ENCODE measurements at regions of chr11 and their contacts with region 1.

Region 1: DNA sequence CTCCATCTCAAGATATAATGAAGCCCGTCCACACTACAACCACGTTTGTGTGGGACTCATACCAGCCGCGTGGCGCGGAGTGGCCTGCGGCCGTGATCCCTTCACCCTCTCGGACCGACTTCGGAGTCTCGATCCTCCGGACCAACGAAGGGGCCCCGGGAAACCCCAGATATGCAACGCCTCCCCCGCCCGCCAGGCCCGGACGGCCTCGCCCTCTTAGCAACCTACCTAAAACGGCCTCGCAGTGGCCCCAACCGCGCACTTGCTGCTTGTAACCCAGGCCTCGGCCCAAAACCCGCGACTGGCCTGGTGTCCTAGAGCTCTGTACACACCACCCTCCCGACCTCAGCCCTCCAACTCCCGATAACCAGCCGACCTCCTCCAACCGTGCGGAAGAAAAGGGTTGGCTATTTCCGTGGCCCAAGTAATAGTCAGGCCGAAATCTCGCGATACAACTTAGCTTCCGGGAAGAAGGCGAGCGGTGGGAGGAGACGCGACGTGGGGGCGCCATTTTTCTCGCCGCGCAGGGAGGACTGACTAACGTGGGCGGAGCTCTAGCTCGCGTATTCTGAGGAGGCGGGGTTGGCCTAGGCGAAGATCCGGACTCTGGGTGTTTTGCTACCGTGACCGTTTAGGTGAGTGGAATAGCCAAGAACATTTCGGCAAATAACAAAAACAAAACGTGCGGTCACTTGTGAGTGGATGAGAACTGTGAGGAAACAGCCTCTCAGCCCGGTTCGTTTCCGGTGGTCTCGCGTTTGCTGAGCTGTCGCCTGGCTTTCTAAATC is at the starts of genes C11orf54 and TAF1D:
- DNase-seq: peak; percentile 97
- ATAC-seq: peak; percentile 95
- H3K4me3 ChIP-seq: peak within 1 kb of the TSS; percentile 70
- H3K27ac ChIP-seq: peak within 1 kb of the TSS; percentile 94
- H3K4me1 ChIP-seq: no peaks in the 10 kb centered on the region
- H3K27me3 ChIP-seq: no peaks in the 10 kb centered on the region
- CTCF ChIP-seq: no peak
- POLR2A ChIP-seq: peak; percentile 99
- RAD21 ChIP-seq: no peak
- total RNA-seq, gene C11orf54: 16.0 and 21.4 TPM in 2 replicates
- total RNA-seq, gene TAF1D: 56.8 and 147 TPM in 2 replicates

Region 2: DNA sequence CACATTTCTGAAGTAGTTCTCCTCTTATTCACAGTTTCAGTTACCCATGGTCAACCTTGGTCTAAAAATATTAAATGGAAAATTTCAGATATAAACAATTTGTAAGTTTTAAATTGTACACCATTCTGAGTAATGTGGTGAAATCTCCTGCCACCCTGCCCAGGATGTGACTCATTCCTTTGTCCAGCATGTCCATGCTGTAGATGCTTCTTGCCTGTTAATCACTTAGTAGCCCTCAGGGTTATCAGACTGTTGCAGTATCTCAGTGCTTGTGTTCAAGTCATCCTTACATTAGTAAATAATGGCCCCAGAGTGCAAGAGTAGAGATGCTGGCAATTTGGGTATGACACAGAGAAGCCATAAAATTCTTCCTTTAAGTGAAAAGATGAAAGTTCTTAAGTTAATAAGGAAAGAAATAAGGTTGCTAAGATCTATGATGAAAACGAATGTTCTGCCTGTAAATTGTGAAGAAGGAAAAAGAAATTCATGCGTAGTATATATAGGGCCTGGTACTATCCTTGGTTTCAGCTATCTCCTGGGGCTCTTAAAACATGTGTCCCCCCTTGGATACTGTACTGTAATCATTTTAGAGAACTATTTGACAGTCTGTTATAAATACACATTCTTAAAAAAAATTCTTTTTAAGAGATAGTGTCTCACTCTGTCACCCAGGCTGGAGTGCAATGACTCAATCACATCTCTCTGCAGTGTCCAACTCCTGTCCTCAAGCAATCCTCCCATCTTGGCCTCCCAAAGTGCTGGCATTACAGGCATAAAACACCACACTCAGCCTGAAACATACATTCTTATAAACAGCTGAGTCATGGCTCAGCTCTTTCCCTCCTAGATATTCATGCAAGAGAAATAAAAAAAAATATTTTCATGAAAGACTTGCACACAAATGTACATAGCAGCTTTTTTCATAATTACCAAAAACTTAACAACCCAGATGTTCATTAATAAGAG is 740.5 kb before region 1 on chr11:
- CTCF ChIA-PET with region 1: no interaction called
- POLR2A ChIA-PET with region 1: interaction called, 10 read pairs
- dilution Hi-C with region 1: no loop called
- in situ Hi-C with region 1: no loop called
- intact Hi-C with region 1: no loop called
- DNase-seq: peak; percentile 95
- ATAC-seq: peak; percentile 90
- H3K4me3 ChIP-seq: no peak overlapping the region
- H3K27ac ChIP-seq: peak overlapping the region; percentile 68; the same call in 1 of the 2 replicates
- H3K4me1 ChIP-seq: peaks cover 6% of the 10 kb centered on the region
- H3K27me3 ChIP-seq: no peaks in the 10 kb centered on the region
- CTCF ChIP-seq: no peak
- POLR2A ChIP-seq: no peak
- RAD21 ChIP-seq: peak; percentile 16; the same call in 1 of the 2 replicates

Region 3: GRCh38 chr11:93784152-93784934 is 43.1 kb after region 1 on chr11 and contains the start of gene MED17:
- CTCF ChIA-PET with region 1: no interaction called
- POLR2A ChIA-PET with region 1: interaction called, 6 read pairs
- dilution Hi-C with region 1: no loop called
- in situ Hi-C with region 1: no loop called
- intact Hi-C with region 1: loop called (anchors 1 kb)
- DNase-seq: peak; percentile 92
- ATAC-seq: peak; percentile 96
- H3K4me3 ChIP-seq: peak within 1 kb of the TSS; percentile 91
- H3K27ac ChIP-seq: peak within 1 kb of the TSS; percentile 94
- H3K4me1 ChIP-seq: peaks cover 4% of the 10 kb centered on the region; the same call in 1 of the 2 replicates
- H3K27me3 ChIP-seq: no peaks in the 10 kb centered on the region
- CTCF ChIP-seq: peak; percentile 43
- POLR2A ChIP-seq: peak; percentile 84; the same call in 1 of the 2 replicates
- RAD21 ChIP-seq: peak; percentile 4; the same call in 1 of the 2 replicates
- total RNA-seq, gene MED17: 23.3 and 34.7 TPM in 2 replicates

Region 4: DNA sequence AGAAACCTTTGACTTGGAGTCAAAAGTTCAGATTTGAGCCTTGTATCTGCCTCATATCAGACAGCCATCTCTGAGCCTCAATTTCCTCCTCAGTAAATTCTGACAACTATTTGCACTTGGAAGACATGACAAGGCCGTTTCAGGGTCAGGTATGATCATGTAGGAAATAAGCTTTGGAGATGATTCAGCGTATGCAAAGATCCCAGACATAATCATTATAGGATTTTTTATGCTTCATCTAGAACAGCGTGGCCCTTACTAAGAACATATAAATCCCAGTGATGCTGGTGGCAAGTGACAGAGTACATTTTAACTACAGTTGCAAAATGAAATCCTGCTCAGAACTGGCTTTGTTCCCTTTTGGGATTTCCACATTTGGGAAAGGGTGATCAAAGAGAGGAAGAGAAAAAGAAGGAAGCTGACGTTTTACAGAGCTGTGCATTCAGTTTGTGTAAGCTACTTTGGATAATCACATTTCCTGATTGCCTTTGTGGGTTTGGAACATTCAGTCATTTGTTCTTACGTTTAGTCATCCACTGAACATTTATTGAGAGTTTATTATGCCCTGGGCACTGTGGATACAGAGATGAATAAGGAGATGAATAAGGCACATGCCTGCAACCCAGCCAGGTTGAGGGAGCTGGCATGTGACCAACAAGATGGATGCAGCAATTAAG is 197.9 kb after region 1 on chr11:
- CTCF ChIA-PET with region 1: no interaction called
- POLR2A ChIA-PET with region 1: no interaction called
- dilution Hi-C with region 1: no loop called
- in situ Hi-C with region 1: no loop called
- intact Hi-C with region 1: no loop called
- DNase-seq: peak; percentile 11
- ATAC-seq: no peak
- H3K4me3 ChIP-seq: no peak overlapping the region
- H3K27ac ChIP-seq: no peak overlapping the region
- H3K4me1 ChIP-seq: no peaks in the 10 kb centered on the region
- H3K27me3 ChIP-seq: peaks cover 9% of the 10 kb centered on the region
- CTCF ChIP-seq: no peak
- POLR2A ChIP-seq: no peak
- RAD21 ChIP-seq: no peak

Region 5: DNA sequence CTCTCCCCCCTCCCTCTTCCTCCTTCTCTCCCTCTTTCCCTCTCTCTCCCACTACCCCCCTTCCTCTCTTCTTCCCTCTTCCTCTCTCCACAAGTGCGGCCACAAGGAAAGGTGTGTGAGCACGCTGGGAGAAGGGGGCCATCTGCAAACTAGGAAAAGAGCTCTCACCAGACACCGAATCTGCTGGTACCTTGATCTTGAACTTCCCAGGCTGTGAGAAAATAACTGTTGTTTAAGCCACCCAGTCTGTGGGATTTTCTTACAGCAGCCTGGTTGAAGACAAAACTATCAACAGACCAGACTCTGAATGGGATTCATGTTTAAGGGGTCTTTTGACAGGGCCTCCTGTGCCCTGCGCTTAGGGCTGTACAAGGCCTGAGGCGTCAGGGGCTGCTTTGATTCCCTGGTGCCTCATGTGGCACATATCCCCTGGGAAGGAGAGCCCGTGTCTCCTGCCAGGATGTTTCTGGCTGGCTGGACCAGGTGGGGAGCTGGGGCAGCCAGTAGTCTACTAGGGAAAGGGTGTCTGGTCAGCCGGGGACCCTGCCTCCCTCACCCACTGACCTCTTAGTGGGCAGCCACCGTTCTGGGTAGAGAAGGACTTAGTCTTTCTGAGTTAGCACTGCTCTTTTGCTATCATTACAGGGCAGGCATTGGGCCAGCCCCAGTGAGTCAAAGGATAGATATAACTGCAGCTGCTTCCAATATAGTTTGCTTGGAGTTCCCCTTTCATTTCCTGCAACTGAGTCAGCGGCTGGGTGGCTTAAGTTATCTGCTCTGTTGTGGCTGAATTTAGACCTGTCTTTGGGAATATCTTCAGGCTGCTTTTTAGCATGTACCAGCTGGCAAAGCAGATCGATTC is 393.6 kb after region 1 on chr11:
- CTCF ChIA-PET with region 1: no interaction called
- POLR2A ChIA-PET with region 1: interaction called, 4 read pairs
- dilution Hi-C with region 1: no loop called
- in situ Hi-C with region 1: loop called (anchors 10 kb)
- intact Hi-C with region 1: no loop called
- DNase-seq: peak; percentile 96
- ATAC-seq: peak; percentile 50
- H3K4me3 ChIP-seq: peak overlapping the region; percentile 18; the same call in 1 of the 2 replicates
- H3K27ac ChIP-seq: peak overlapping the region; percentile 92
- H3K4me1 ChIP-seq: peaks cover 34% of the 10 kb centered on the region
- H3K27me3 ChIP-seq: no peaks in the 10 kb centered on the region
- CTCF ChIP-seq: no peak
- POLR2A ChIP-seq: peak; percentile 27; the same call in 1 of the 2 replicates
- RAD21 ChIP-seq: no peak; the same call in 1 of the 2 replicates

Region 6: DNA sequence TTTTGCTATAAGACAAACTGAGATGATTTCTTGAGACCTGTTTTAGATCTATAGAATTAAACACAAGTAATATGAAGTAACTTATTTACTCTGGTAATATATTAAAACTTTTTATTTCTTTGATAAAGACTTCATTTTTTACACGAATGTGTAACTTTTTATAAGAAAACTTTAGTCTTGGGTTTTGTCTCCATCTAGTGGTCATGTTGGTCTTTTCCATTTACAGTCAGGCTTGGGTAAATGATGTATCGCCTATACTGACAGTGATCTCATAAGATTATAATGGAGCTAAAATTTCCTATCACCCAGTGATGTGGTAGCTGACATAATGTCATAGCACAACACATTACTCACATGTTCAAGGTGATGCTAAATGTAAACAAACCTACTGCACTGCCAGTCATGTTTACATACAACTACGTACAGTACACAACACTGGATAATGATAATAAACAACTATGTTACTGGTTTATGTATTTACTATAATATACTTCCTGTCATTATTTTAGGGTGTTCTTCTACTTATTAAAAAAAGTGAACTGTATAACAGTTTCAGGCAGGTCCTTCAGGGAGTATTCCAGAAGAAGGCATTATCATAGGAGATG is 763.5 kb after region 1 on chr11:
- CTCF ChIA-PET with region 1: no interaction called
- POLR2A ChIA-PET with region 1: no interaction called
- dilution Hi-C with region 1: no loop called
- in situ Hi-C with region 1: no loop called
- intact Hi-C with region 1: loop called (anchors 2 kb)
- DNase-seq: peak; percentile 68
- ATAC-seq: peak; percentile 67
- H3K4me3 ChIP-seq: no peak overlapping the region
- H3K27ac ChIP-seq: no peak overlapping the region
- H3K4me1 ChIP-seq: no peaks in the 10 kb centered on the region
- H3K27me3 ChIP-seq: no peaks in the 10 kb centered on the region; the same call in 1 of the 2 replicates
- CTCF ChIP-seq: peak; percentile 75
- POLR2A ChIP-seq: no peak
- RAD21 ChIP-seq: peak; percentile 78

Measured in IMR-90 (cell line).